ENCODE measurements at regions of chr1 and their contacts with region 1.

Region 1: DNA sequence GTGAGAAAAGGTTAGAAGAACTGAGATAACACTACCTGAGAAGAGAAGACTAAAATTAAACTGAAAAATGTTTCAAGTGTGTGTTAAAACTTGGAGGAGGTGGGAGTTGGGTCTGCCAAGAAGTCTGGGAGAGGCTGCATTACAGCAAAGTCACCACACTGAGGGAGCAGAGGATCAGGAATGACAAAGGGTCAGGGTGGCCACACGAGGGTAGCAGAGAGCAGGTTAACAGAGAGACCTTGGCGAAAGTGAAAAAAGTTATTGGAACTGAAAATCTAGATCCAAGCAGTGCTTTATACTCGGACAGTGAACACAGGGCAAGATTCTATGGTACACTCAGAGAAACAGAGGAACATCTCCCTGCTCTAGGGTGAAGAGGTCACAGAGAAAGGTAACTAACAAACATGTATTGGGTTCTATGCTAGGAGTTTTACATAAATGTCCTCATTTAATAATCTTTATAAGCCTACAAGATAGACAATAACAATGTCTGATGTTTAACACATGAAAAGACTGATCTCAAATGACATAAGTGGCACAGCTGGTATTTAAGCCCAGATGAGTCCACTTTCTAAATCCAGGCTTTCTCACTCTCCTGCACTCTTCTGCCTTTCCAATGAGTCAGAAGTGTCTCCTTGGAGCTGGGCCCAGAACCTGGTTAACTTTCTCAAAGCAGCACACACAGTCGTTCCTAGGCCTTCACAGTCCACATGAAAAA is 10.3 kb upstream of the CADM3 start:
- DNase-seq: peak; percentile 99
- H3K4me3 Mint-ChIP-seq: peak overlapping the region; percentile 43
- H3K27ac Mint-ChIP-seq: peak overlapping the region; percentile 69
- H3K4me1 Mint-ChIP-seq: peaks cover 34% of the 10 kb centered on the region
- H3K27me3 Mint-ChIP-seq: peaks cover 36% of the 10 kb centered on the region
- CTCF ChIP-seq: peak; percentile 100

Region 2: GRCh38 chr1:159141584-159142390 is 19.4 kb before region 1 on chr1:
- CTCF ChIA-PET with region 1: interaction called, 37 read pairs
- POLR2A ChIA-PET with region 1: no interaction called
- intact Hi-C with region 1: loop called (anchors 1 kb)
- DNase-seq: peak; percentile 72
- H3K4me3 Mint-ChIP-seq: no peak overlapping the region
- H3K27ac Mint-ChIP-seq: no peak overlapping the region
- H3K4me1 Mint-ChIP-seq: no peaks in the 10 kb centered on the region
- H3K27me3 Mint-ChIP-seq: no peaks in the 10 kb centered on the region
- CTCF ChIP-seq: no peak

Region 3: DNA sequence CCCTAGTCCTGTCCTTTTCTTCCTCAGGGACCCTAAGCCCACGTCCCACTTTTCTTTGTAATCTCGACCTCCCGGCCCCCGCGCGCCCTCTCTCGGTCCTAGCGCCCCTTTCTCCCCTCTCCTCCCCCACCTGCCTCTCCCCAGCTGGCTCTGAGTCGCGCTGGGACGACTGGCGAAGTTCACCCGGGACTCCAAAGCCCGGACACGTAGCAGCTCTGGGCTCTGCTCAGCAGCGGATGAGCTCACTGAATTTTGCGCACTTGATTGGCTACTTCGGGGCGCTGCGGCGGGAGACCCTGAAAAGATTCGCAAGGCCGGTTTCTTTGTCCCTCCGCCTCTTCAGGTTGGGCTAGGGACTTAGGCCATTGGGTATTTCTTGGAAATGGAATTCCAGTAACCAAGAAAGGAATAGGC is 27.2 kb after region 1 on chr1:
- CTCF ChIA-PET with region 1: interaction called, 386 read pairs
- POLR2A ChIA-PET with region 1: no interaction called
- intact Hi-C with region 1: no loop called
- DNase-seq: no peak
- H3K4me3 Mint-ChIP-seq: no peak overlapping the region
- H3K27ac Mint-ChIP-seq: no peak overlapping the region
- H3K4me1 Mint-ChIP-seq: peaks cover 36% of the 10 kb centered on the region
- H3K27me3 Mint-ChIP-seq: peaks cover 38% of the 10 kb centered on the region
- CTCF ChIP-seq: no peak

Region 4: GRCh38 chr1:159408862-159409400 is 247.8 kb after region 1 on chr1:
- CTCF ChIA-PET with region 1: no interaction called
- POLR2A ChIA-PET with region 1: no interaction called
- intact Hi-C with region 1: no loop called
- DNase-seq: no peak
- H3K4me3 Mint-ChIP-seq: no peak overlapping the region
- H3K27ac Mint-ChIP-seq: no peak overlapping the region
- H3K4me1 Mint-ChIP-seq: no peaks in the 10 kb centered on the region
- H3K27me3 Mint-ChIP-seq: no peaks in the 10 kb centered on the region
- CTCF ChIP-seq: no peak

Region 5: DNA sequence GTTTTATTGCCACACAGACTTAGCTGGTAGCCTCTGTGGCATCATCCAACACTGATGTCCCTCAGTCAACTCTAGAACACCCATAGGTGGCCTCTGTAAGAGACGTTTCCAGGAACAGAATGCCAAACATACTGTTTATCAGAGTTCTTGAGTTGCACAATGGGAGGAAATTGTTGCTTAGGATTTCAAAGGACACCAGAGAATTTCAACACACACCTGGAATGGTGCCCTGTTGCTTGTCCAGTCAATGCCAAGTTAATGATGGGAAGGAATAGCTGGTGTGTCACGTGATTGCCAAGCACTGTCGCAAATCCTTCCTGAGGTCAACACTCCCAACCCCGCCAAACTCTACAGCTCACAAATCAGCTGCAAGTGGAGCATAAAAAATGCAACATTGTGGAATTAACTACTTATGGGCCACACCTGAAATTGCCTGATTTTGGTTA is 591.0 kb after region 1 on chr1:
- CTCF ChIA-PET with region 1: interaction called, 11 read pairs
- POLR2A ChIA-PET with region 1: interaction called, 3 read pairs
- intact Hi-C with region 1: no loop called
- DNase-seq: peak; percentile 100
- H3K4me3 Mint-ChIP-seq: no peak overlapping the region
- H3K27ac Mint-ChIP-seq: peak overlapping the region; percentile 78
- H3K4me1 Mint-ChIP-seq: peaks cover 44% of the 10 kb centered on the region
- H3K27me3 Mint-ChIP-seq: no peaks in the 10 kb centered on the region
- CTCF ChIP-seq: no peak

Region 6: GRCh38 chr1:159780583-159781582 is 619.7 kb after region 1 on chr1 and contains the start of gene DUSP23:
- CTCF ChIA-PET with region 1: interaction called, 147 read pairs
- POLR2A ChIA-PET with region 1: interaction called, 17 read pairs
- intact Hi-C with region 1: loop called (anchors 1 kb)
- DNase-seq: peak; percentile 100
- H3K4me3 Mint-ChIP-seq: peak within 1 kb of the TSS; percentile 87
- H3K27ac Mint-ChIP-seq: peak within 1 kb of the TSS; percentile 71
- H3K4me1 Mint-ChIP-seq: peaks cover 65% of the 10 kb centered on the region
- H3K27me3 Mint-ChIP-seq: no peaks in the 10 kb centered on the region
- CTCF ChIP-seq: peak; percentile 97
- total RNA-seq, gene DUSP23: 119 and 178 TPM in 2 replicates

Region 7: GRCh38 chr1:159881930-159882839 is 721.0 kb after region 1 on chr1:
- CTCF ChIA-PET with region 1: interaction called, 17 read pairs
- POLR2A ChIA-PET with region 1: no interaction called
- intact Hi-C with region 1: no loop called
- DNase-seq: peak; percentile 100
- H3K4me3 Mint-ChIP-seq: no peak overlapping the region
- H3K27ac Mint-ChIP-seq: no peak overlapping the region
- H3K4me1 Mint-ChIP-seq: peaks cover 14% of the 10 kb centered on the region
- H3K27me3 Mint-ChIP-seq: no peaks in the 10 kb centered on the region
- CTCF ChIP-seq: no peak

Measured in MCF 10A (cell line).